Dorsolateral prefrontal cortex (tissue), 120 donors: ENCODE measurements at regions of chr5 and their contacts with region 1.

Region 1: GRCh38 chr5:54234304-54234933 is 76.0 kb downstream of the ARL15 start:
- DNase-seq: no peak
- H3K4me3 ChIP-seq: peak overlapping the region in 20 of 59 donors; percentile 1 to 43 (median 23)
- H3K27ac ChIP-seq: no peak overlapping the region
- H3K27me3 ChIP-seq: no peaks in the 10 kb centered on the region
- CTCF ChIP-seq: peak; percentile 35 to 73 (median 57)

Region 2: GRCh38 chr5:53425598-53426511 is 808.6 kb before region 1 on chr5:
- intact Hi-C with region 1: loop called in 1 of 2 experiments (anchors 5 kb)
- DNase-seq: no peak
- H3K4me3 ChIP-seq: no peak overlapping the region
- H3K27ac ChIP-seq: no peak overlapping the region
- H3K27me3 ChIP-seq: no peaks in the 10 kb centered on the region
- CTCF ChIP-seq: peak in 48 of 56 donors; percentile 17 to 68 (median 42)